Activated CD4-positive, alpha-beta T cell treated with anti-CD3 and anti-CD28 coated beads, Interleukin-2, amount 10 ng/mL, durations not matched to agents 24 days and 14 days (primary cell): ENCODE measurements at regions of chr1 and their contacts with region 1.

Region 1: GRCh38 chr1:112715264-112716053 is at the start of gene PPM1J:
- DNase-seq: peak; percentile 100
- H3K4me3 Mint-ChIP-seq: peak within 1 kb of the TSS; percentile 89
- H3K27ac Mint-ChIP-seq: peak within 1 kb of the TSS; percentile 35
- H3K4me1 Mint-ChIP-seq: peaks cover 29% of the 10 kb centered on the region
- H3K27me3 Mint-ChIP-seq: peaks cover 41% of the 10 kb centered on the region
- total RNA-seq, gene PPM1J: 1.2 and 1.4 TPM in 2 replicates

Region 2: GRCh38 chr1:112390775-112391602 is 324.5 kb before region 1 on chr1:
- intact Hi-C with region 1: loop called (anchors 2 kb)
- DNase-seq: peak; percentile 94
- H3K4me3 Mint-ChIP-seq: peak overlapping the region; percentile 80
- H3K27ac Mint-ChIP-seq: peak overlapping the region; percentile 62
- H3K4me1 Mint-ChIP-seq: peaks cover 37% of the 10 kb centered on the region
- H3K27me3 Mint-ChIP-seq: peaks cover 9% of the 10 kb centered on the region

Region 3: GRCh38 chr1:112803906-112804762 is 88.7 kb after region 1 on chr1:
- intact Hi-C with region 1: loop called (anchors 1 kb)
- DNase-seq: peak; percentile 86
- H3K4me3 Mint-ChIP-seq: no peak overlapping the region
- H3K27ac Mint-ChIP-seq: no peak overlapping the region
- H3K4me1 Mint-ChIP-seq: peaks cover 2% of the 10 kb centered on the region
- H3K27me3 Mint-ChIP-seq: peaks cover 11% of the 10 kb centered on the region

Region 4: GRCh38 chr1:112881742-112882127 is 166.3 kb after region 1 on chr1:
- intact Hi-C with region 1: loop called (anchors 1 kb)
- DNase-seq: no peak
- H3K4me3 Mint-ChIP-seq: no peak overlapping the region
- H3K27ac Mint-ChIP-seq: no peak overlapping the region
- H3K4me1 Mint-ChIP-seq: peaks cover 3% of the 10 kb centered on the region
- H3K27me3 Mint-ChIP-seq: peaks cover 21% of the 10 kb centered on the region

Region 5: DNA sequence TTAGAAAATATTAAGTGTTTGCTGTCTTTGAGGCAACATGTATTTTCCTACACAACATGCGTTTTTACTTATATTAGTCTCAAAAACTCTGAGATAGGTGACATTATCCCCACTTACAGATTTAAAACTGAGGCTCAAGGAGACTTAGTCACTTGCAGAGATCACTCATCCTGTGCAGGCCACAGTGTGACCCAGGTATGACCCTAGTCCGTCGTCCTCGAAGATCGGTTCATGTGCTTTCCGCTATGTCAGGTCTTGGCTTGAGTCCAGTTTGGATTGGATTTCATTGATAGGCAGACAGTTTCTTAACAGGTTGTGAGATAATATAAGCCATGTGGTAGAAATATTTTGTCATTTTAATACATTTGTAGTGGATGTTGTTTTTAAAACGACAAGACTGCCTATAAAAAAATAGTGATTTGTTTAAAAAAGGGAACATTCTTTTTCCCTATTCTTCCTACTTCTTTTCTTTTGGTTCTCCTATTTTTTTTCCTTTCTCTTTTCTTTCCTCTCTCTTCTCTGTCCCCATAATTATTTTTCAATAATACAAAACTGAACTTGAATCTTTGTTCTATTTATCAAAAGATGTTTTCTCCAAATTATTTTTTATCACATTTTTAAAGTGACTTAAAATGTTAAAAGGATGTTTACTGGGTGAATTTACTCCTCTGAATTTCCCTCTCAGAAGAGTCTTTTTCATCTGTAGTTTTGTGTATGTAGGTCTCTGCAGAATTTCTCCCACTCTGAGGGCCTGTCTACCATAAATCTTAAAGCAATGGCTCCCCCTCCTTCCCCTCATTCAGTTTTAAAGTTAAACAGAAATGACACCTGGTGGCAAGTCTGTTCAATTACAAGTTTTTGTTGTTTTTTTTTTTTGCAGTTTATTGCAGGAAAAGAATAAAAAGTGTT is 962.0 kb after region 1 on chr1:
- intact Hi-C with region 1: loop called (anchors 5 kb)
- DNase-seq: peak; percentile 65
- H3K4me3 Mint-ChIP-seq: no peak overlapping the region
- H3K27ac Mint-ChIP-seq: no peak overlapping the region
- H3K4me1 Mint-ChIP-seq: peaks cover 10% of the 10 kb centered on the region
- H3K27me3 Mint-ChIP-seq: no peaks in the 10 kb centered on the region